Breast epithelium (tissue), 4 donors: ENCODE measurements at regions of chr9 and their contacts with region 1.

Region 1: GRCh38 chr9:127809512-127810377 is 7.1 kb downstream of the FPGS start:
- DNase-seq: no peak
- H3K4me3 ChIP-seq: peak overlapping the region in 2 of 3 donors; percentile 35 to 55
- H3K27ac ChIP-seq: peak overlapping the region; percentile 12 to 68
- H3K4me1 ChIP-seq: no peaks in the 10 kb centered on the region
- H3K27me3 ChIP-seq: no peaks in the 10 kb centered on the region
- CTCF ChIP-seq: no peak
- POLR2A ChIP-seq: no peak

Region 2: DNA sequence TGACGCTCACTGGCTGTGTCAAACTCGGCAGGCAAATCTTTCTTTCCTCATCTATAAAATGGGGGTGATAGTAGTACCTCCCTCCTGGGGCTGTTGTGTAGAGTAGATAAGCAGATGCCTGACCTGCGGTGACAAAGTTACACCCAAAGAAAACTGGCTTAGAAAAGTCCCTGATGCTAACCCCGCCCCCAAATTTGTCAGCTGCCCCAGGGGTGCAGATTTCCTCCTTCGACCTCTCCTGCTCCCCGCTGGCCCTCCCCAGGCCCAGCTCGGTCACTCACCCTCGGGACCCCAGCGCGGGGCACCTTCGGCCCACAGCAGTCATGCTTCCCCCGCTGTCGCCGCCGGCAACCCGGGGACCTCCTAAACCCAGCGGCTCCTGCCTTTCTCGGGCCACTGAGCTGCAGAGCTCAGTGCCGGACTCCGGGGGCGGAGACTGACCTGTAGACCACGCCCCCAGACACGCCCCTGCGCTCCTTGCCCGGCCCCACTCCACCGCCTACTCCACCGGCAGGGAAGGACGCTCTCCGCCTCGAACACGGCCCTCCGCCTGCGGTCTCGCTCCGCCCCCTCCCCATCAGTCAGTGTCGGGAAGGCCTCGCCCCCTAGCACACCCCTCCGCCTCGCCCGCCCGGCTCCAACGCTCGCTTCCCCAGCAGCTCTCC is 38.7 kb before region 1 on chr9:
- intact Hi-C with region 1: loop called (anchors 1 kb)
- DNase-seq: peak; percentile 98
- H3K4me3 ChIP-seq: peak overlapping the region; percentile 52 to 68 (median 61)
- H3K27ac ChIP-seq: peak overlapping the region; percentile 45 to 56
- H3K4me1 ChIP-seq: no peaks in the 10 kb centered on the region
- H3K27me3 ChIP-seq: no peaks in the 10 kb centered on the region
- CTCF ChIP-seq: no peak
- POLR2A ChIP-seq: peak; percentile 13

Region 3: GRCh38 chr9:127838375-127839078 is 28.8 kb after region 1 on chr9:
- intact Hi-C with region 1: no loop called
- DNase-seq: no peak
- H3K4me3 ChIP-seq: peak overlapping the region in 1 of 3 donors; percentile 37
- H3K27ac ChIP-seq: peak overlapping the region; percentile 65 to 98
- H3K4me1 ChIP-seq: peaks cover 9 to 22% of the 10 kb centered on the region in 2 donors
- H3K27me3 ChIP-seq: no peaks in the 10 kb centered on the region
- CTCF ChIP-seq: no peak
- POLR2A ChIP-seq: no peak

Region 4: GRCh38 chr9:128947422-128948301 is 1137.9 kb after region 1 on chr9 and contains the starts of genes DOLK and NUP188:
- intact Hi-C with region 1: loop called (anchors 5 kb)
- DNase-seq: peak; percentile 93 to 97
- H3K4me3 ChIP-seq: peak within 1 kb of the TSS; percentile 89 to 96 (median 94)
- H3K27ac ChIP-seq: peak within 1 kb of the TSS; percentile 92 to 94
- H3K4me1 ChIP-seq: no peaks in the 10 kb centered on the region
- H3K27me3 ChIP-seq: no peaks in the 10 kb centered on the region
- CTCF ChIP-seq: peak in 1 of 3 donors; percentile 13
- POLR2A ChIP-seq: peak; percentile 86
- total RNA-seq, gene DOLK: 11.1 to 16.2 (median 14.3) TPM
- total RNA-seq, gene NUP188: 32.3 to 49.5 (median 36.0) TPM